Left cardiac atrium (tissue), 4 donors: ENCODE measurements at regions of chr17 and their contacts with region 1.

Region 1: GRCh38 chr17:36918211-36918691 is 19.0 kb upstream of the LHX1 start:
- DNase-seq: no peak
- ATAC-seq: no peak

Region 2: GRCh38 chr17:36849871-36850348 is 68.3 kb before region 1 on chr17:
- intact Hi-C with region 1: loop called in 1 of 2 experiments (anchors 10 kb)
- DNase-seq: no peak
- ATAC-seq: no peak

Region 3: DNA sequence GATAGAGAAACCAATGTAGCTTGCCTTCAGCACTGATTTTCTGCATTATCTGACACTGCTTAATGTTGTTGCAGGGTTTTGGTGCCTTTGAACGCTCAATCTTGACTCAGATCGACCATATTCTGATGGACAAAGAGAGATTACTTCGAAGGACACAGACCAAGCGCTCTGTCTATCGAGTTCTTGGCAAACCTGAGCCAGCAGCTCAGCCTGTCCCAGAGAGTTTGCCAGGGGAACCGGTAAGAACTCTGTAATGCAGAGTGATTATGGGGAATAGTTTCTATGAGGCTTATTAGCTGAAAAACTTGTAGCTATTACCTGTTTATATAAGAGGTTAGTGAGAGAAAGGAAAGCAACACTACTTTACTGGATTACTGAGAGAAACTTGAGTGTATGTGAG is 70.9 kb after region 1 on chr17:
- intact Hi-C with region 1: no loop called
- DNase-seq: no peak
- ATAC-seq: no peak